GM12878 (cell line): ENCODE measurements at regions of chr5 and their contacts with region 1.

Region 1: GRCh38 chr5:43631182-43631910 is 28.4 kb downstream of the NNT start:
- DNase-seq: peak; percentile 33
- ATAC-seq: peak; percentile 100
- H3K4me3 ChIP-seq: no peak overlapping the region
- H3K27ac ChIP-seq: no peak overlapping the region
- H3K4me1 ChIP-seq: no peaks in the 10 kb centered on the region
- H3K27me3 ChIP-seq: no peaks in the 10 kb centered on the region
- CTCF ChIP-seq: peak; percentile 48 to 71 (median 56)
- EP300 ChIP-seq: no peak
- POLR2A ChIP-seq: no peak
- RAD21 ChIP-seq: peak; percentile 36; the same call in 1 of the 2 replicates

Region 2: GRCh38 chr5:43602461-43603343 is 28.6 kb before region 1 on chr5 and contains the start of gene NNT:
- CTCF ChIA-PET with region 1: interaction called, 37 read pairs
- POLR2A ChIA-PET with region 1: no interaction called
- RAD21 ChIA-PET with region 1: interaction called, 4 read pairs
- SMC1A ChIA-PET with region 1: interaction called, 4 read pairs
- in situ Hi-C with region 1: no loop called
- intact Hi-C with region 1: no loop called
- DNase-seq: no peak
- ATAC-seq: peak; percentile 87
- H3K4me3 ChIP-seq: peak within 1 kb of the TSS; percentile 93
- H3K27ac ChIP-seq: peak within 1 kb of the TSS; percentile 98
- H3K4me1 ChIP-seq: peaks cover 4% of the 10 kb centered on the region; the same call in 1 of the 2 replicates
- H3K27me3 ChIP-seq: no peaks in the 10 kb centered on the region
- CTCF ChIP-seq: no peak
- EP300 ChIP-seq: no peak
- POLR2A ChIP-seq: peak; percentile 93
- RAD21 ChIP-seq: no peak
- polyA plus RNA-seq, gene NNT: 20.8 to 23.1 TPM

Region 3: GRCh38 chr5:43616535-43616934 is 14.8 kb before region 1 on chr5:
- CTCF ChIA-PET with region 1: interaction called, 53 read pairs
- POLR2A ChIA-PET with region 1: no interaction called
- RAD21 ChIA-PET with region 1: interaction called, 4 read pairs
- SMC1A ChIA-PET with region 1: interaction called, 11 read pairs
- in situ Hi-C with region 1: no loop called
- intact Hi-C with region 1: no loop called
- DNase-seq: no peak
- ATAC-seq: no peak
- H3K4me3 ChIP-seq: no peak overlapping the region
- H3K27ac ChIP-seq: no peak overlapping the region
- H3K4me1 ChIP-seq: no peaks in the 10 kb centered on the region
- H3K27me3 ChIP-seq: no peaks in the 10 kb centered on the region
- CTCF ChIP-seq: no peak
- EP300 ChIP-seq: no peak
- POLR2A ChIP-seq: no peak
- RAD21 ChIP-seq: no peak

Region 4: DNA sequence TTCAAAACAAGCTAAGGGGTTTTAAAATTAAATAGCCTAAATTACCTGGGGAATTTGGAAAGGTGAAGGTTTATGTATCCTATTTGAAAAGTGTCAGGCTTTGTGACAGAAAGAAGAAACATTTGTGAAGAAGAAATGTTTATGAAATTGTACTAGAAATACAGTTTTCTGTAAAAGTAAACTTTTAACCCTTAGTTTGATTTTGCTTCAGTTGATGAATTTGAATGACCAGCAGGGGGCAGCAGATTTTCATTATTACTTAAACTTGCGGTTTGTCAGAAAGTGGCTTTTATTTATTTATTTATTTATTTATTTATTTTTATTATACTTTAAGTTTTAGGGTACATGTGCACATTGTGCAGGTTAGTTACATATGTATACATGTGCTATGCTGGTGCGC is 29.8 kb after region 1 on chr5:
- CTCF ChIA-PET with region 1: interaction called, 19 read pairs
- POLR2A ChIA-PET with region 1: no interaction called
- RAD21 ChIA-PET with region 1: no interaction called
- SMC1A ChIA-PET with region 1: interaction called, 3 read pairs
- in situ Hi-C with region 1: no loop called
- intact Hi-C with region 1: no loop called
- DNase-seq: no peak
- ATAC-seq: no peak
- H3K4me3 ChIP-seq: no peak overlapping the region
- H3K27ac ChIP-seq: no peak overlapping the region
- H3K4me1 ChIP-seq: no peaks in the 10 kb centered on the region
- H3K27me3 ChIP-seq: no peaks in the 10 kb centered on the region
- CTCF ChIP-seq: peak in 2 of 3 experiments; percentile 20 to 29; a peak in 3 of 6 replicates
- EP300 ChIP-seq: no peak
- POLR2A ChIP-seq: no peak
- RAD21 ChIP-seq: peak; percentile 37

Region 5: DNA sequence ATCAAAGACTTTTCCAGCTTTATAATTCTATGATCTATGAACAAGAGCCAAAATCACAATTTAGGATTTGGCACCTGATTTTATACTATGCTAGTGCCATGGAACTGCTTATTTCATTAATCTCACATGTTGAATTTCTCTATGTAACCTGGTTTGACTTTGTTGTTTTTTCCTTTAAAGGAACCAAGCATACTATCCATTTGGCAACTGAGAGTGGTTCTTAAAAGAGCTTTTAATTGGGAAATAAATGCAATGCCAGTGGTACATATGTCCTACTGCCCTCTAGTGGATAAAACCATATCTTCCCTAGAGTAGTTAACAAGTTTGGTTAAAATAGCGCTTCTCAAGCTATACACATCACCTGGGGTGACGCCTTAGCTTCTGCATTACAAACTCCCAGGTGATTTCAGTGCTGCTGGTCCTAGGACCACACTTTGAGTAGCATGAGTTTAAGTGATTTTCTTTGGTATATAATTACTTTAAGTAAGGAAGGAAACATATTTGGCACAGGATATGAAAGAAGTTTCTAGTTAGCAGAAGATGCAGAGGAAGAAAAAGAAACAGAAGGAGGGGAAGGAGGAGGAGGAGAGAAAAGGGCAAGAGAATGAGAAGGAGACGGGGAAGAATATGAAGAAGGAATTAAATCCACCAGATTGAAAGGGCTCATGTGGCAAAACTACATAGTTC is 701.1 kb after region 1 on chr5:
- CTCF ChIA-PET with region 1: interaction called, 23 read pairs
- POLR2A ChIA-PET with region 1: no interaction called
- RAD21 ChIA-PET with region 1: interaction called, 10 read pairs
- SMC1A ChIA-PET with region 1: interaction called, 4 read pairs
- in situ Hi-C with region 1: no loop called
- intact Hi-C with region 1: no loop called
- DNase-seq: no peak
- ATAC-seq: peak; percentile 84
- H3K4me3 ChIP-seq: no peak overlapping the region
- H3K27ac ChIP-seq: no peak overlapping the region
- H3K4me1 ChIP-seq: no peaks in the 10 kb centered on the region
- H3K27me3 ChIP-seq: no peaks in the 10 kb centered on the region
- CTCF ChIP-seq: peak; percentile 54 to 57 (median 55); a peak in 5 of 6 replicates
- EP300 ChIP-seq: no peak
- POLR2A ChIP-seq: no peak
- RAD21 ChIP-seq: peak; percentile 50